K562 (cell line): ENCODE measurements at regions of chr9 and their contacts with region 1.

Region 1: GRCh38 chr9:125233678-125234077 is 7.5 kb downstream of the HSPA5 start:
- DNase-seq: peak in 1 of 4 experiments; percentile 21
- ATAC-seq: peak; percentile 7
- H3K4me3 ChIP-seq: no peak overlapping the region
- H3K27ac ChIP-seq: peak overlapping the region; percentile 10; the same call in 2 of the 3 replicates
- H3K4me1 ChIP-seq: peaks cover 4 to 15% of the 10 kb centered on the region in 2 experiments; a peak in 2 of 5 replicates
- H3K27me3 ChIP-seq: no peaks in the 10 kb centered on the region
- CTCF ChIP-seq: no peak
- EP300 ChIP-seq: no peak
- POLR2A ChIP-seq: no peak
- RAD21 ChIP-seq: no peak

Region 2: DNA sequence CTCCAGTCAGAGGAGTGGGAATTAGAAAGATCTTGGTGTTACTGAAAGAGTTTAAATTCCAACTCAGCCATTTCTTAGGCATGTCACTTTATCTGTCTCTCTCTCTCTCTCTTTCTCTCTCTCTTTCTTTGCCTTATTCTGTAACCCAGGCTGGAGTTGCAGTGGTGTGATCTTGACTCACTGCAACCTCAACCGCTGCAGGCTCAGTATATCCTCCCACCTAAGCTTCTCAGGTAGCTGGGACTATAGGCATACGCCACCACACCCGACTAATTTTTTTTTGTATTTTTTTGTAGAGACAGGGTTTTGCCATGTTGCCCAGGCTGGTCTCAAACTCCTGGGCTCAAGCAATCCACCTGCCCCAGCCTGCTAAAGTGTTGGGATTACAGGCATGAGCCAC is 15.1 kb before region 1 on chr9:
- CTCF ChIA-PET with region 1: no interaction called
- POLR2A ChIA-PET with region 1: interaction called, 75 read pairs
- in situ Hi-C with region 1: no loop called
- intact Hi-C with region 1: no loop called
- DNase-seq: no peak
- ATAC-seq: no peak
- H3K4me3 ChIP-seq: no peak overlapping the region
- H3K27ac ChIP-seq: no peak overlapping the region
- H3K4me1 ChIP-seq: no peaks in the 10 kb centered on the region
- H3K27me3 ChIP-seq: no peaks in the 10 kb centered on the region
- CTCF ChIP-seq: no peak
- EP300 ChIP-seq: no peak
- POLR2A ChIP-seq: no peak
- RAD21 ChIP-seq: no peak